A673 (cell line): ENCODE measurements at regions of chr17 and their contacts with region 1.

Region 1: DNA sequence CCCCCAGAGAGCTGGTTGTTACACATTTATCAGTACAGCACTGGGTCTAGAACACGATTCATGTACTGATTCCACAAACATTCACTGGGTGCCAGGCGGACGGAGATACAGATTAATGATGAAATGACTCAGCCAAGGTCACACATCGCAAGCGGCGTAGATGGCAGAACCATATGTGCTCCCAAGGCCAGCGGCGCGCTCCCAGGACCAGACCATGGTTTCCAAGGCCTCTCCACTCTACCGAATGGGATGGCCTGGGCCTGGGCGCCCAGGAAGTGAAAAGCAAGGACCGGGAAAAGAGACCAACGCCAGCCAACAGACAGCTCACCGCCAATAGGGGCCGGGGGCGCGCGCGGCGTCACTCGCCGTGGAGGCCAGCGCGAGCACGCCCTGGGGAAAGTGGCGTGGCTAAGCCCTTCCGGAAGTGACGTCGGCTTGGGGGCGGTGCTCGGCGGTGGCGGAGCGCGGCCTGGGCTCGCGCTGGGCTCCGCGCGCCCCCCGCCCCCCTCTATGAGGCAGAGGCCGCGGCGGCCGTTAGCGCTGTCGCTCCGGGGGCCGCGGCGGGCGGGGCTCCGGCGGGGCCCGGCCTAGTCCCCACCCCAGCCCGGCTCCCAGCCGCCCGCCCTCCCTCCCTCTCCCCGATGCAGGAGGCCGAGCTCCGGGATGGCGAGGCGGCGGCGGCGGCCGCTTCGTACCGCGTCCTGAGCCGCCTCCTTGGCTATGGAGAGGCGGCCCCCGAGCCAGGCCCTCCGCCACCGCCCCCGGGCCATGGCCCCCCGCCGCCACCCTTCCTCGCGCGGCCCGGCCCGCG is at the start of gene SOCS7:
- DNase-seq: peak; percentile 90
- H3K4me3 ChIP-seq: peak within 1 kb of the TSS; percentile 68
- H3K27ac ChIP-seq: peak within 1 kb of the TSS; percentile 77
- H3K4me1 ChIP-seq: peaks cover 8% of the 10 kb centered on the region
- H3K27me3 ChIP-seq: no peaks in the 10 kb centered on the region
- CTCF ChIP-seq: no peak
- total RNA-seq, gene SOCS7: 15.2 and 17.3 TPM in 2 replicates

Region 2: GRCh38 chr17:38379438-38379837 is 27.8 kb after region 1 on chr17:
- CTCF ChIA-PET with region 1: no interaction called
- POLR2A ChIA-PET with region 1: interaction called, 10 read pairs
- intact Hi-C with region 1: no loop called
- DNase-seq: no peak
- H3K4me3 ChIP-seq: no peak overlapping the region
- H3K27ac ChIP-seq: no peak overlapping the region
- H3K4me1 ChIP-seq: no peaks in the 10 kb centered on the region
- H3K27me3 ChIP-seq: no peaks in the 10 kb centered on the region
- CTCF ChIP-seq: no peak

Region 3: DNA sequence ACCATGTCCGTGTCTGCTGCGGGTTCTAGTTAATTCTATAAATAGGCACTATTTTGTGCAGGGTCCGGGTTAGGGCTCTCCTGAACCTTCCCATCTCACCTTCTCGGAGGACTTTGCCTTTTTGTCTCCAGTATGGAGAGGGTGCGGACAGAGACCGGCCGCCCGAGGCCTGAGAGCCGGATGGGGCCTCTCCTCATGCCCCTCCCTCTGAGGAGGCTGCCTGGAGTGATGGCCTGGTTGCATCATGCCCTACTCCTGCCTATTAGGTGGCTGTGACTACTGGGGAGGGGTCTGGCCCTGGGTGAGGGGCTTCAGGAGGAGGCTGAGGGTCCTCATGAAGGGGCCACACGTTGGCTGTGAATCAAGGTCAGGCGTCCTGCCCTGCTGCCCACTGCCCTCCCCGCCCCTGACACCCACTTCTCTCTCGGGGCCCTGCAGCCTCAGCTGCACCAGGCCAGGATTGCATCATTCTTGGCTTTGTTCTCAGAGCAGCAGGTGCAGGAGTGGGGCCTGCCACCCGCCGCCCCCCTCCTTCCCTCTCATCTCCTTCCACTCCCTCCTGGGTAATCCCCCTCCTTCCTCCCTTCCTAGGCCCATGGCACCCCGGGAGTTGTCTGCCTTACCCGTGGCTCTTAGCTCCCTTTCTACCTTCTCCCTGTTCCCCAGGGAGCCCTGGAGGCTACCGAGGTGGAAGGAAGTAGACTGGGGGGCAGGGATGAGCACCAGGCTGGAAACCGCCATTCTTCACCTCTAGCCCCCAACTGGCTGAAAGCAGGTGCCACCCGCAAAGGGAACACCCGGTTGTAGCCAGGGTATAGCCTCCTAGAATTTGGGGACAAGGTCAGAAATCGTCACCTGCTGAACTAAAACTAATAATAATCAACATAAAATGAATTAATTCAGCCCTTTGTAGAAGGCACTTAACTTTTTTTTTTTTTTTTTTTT is 63.9 kb after region 1 on chr17:
- CTCF ChIA-PET with region 1: interaction called, 27 read pairs
- POLR2A ChIA-PET with region 1: interaction called, 8 read pairs
- intact Hi-C with region 1: loop called (anchors 1 kb)
- DNase-seq: peak; percentile 51
- H3K4me3 ChIP-seq: no peak overlapping the region
- H3K27ac ChIP-seq: peak overlapping the region; percentile 87
- H3K4me1 ChIP-seq: peaks cover 19% of the 10 kb centered on the region
- H3K27me3 ChIP-seq: no peaks in the 10 kb centered on the region
- CTCF ChIP-seq: no peak

Region 4: GRCh38 chr17:38702166-38702899 is 350.7 kb after region 1 on chr17:
- CTCF ChIA-PET with region 1: no interaction called
- POLR2A ChIA-PET with region 1: no interaction called
- intact Hi-C with region 1: no loop called
- DNase-seq: peak; percentile 87
- H3K4me3 ChIP-seq: peak overlapping the region; percentile 71
- H3K27ac ChIP-seq: peak overlapping the region; percentile 57
- H3K4me1 ChIP-seq: no peaks in the 10 kb centered on the region
- H3K27me3 ChIP-seq: no peaks in the 10 kb centered on the region
- CTCF ChIP-seq: no peak